Heart left ventricle (tissue), 16 donors: ENCODE measurements at regions of chr21 and their contacts with region 1.

Region 1: DNA sequence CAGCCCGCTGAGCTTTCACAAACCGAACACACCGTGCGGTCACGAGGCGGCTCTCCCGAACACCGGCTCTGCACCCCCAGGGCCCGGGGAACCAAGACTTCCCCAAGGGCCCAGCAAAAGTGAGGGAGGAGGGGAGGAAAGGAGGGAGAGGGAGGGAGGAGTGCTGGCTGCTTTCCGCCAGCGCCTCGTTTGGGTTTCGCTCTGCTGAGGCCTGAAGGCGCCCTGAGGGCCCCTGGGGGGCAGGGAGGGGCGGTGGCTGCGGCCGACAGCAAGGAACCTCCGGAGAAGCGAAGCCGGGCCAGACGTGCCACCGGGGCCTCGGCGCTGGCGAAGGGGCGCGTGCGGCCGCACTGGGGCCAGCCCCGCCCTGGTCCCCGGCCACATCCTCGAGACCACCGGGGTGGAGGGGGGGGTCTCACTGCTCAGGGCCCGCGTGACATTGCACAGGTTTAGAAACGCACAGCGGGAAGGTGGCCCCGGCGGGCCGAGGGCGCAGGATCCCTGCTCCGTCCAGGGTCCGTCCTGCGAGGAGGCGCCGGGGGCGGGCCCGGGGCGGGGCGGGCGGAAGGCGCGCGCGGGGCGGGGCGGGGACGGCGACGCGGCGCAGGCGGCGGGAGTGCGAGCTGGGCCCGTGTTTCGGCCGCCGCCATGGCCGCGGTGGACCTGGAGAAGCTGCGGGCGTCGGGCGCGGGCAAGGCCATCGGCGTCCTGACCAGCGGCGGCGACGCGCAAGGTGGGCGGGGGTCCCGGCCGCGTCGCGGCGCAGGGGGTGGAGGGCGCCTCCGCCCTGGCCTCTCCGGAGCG is at the start of gene PFKL:
- DNase-seq: peak; percentile 72 to 85 (median 76)
- ATAC-seq: peak in 3 of 4 donors; percentile 36 to 72 (median 71)
- H3K4me3 ChIP-seq: peak within 1 kb of the TSS; percentile 61 to 96 (median 83)
- H3K27ac ChIP-seq: peak within 1 kb of the TSS; percentile 80 to 97 (median 92)
- H3K4me1 ChIP-seq: peaks cover 9 to 67% (median 58%) of the 10 kb centered on the region in 12 donors
- H3K27me3 ChIP-seq: no peaks in the 10 kb centered on the region
- CTCF ChIP-seq: no peak
- POLR2A ChIP-seq: peak in 1 of 2 donors; percentile 34
- total RNA-seq, gene PFKL: 36.9 to 85.1 (median 46.1) TPM

Region 2: DNA sequence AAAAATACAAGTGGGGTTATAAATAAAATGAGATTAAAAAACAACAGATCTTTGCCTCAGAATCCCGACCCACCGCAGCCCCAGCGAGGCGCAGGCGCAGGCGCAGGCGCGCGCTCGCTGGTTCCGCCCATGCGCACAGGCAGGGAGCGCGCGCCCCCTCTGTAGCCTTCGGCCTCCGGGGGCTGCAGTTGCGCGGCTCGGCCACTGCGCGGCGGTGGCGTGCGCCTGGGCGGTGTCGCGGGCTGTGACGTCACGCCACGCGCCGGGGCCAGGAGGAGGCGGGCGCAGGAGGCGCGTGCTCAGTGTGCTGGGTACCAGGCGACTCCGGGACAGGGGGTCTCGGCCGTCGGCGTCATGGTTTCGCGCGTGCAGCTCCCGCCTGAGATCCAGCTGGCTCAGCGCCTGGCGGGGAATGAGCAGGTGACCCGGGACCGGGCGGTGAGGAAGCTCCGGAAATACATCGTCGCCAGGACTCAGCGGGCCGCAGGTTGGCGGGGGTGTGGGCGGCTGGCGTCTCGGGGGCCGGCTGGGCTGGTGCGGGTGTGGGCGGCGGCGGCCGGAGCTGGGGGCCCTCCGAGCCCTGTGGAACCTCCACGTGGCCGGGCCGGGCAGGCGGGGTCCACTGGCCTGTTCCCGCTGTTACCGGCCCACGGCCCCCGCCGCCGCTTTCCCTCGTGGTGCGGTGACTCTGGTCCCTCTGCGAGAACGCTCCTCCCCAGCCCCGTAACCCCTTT is 510.2 kb before region 1 on chr21 and contains the start of gene RRP1:
- intact Hi-C with region 1: loop called in 1 of 10 experiments (anchors 10 kb)
- DNase-seq: peak; percentile 89 to 97 (median 93)
- ATAC-seq: peak; percentile 83 to 96 (median 96)
- H3K4me3 ChIP-seq: peak within 1 kb of the TSS; percentile 75 to 97 (median 86)
- H3K27ac ChIP-seq: peak within 1 kb of the TSS in 11 of 12 donors; percentile 65 to 95 (median 89)
- H3K4me1 ChIP-seq: peaks cover 0 to 20% (median 13%) of the 10 kb centered on the region in 12 donors
- H3K27me3 ChIP-seq: no peaks in the 10 kb centered on the region
- CTCF ChIP-seq: peak; percentile 95 to 100 (median 100)
- POLR2A ChIP-seq: peak in 1 of 2 donors; percentile 90
- total RNA-seq, gene RRP1: 6.0 to 15.6 (median 9.8) TPM

Region 3: DNA sequence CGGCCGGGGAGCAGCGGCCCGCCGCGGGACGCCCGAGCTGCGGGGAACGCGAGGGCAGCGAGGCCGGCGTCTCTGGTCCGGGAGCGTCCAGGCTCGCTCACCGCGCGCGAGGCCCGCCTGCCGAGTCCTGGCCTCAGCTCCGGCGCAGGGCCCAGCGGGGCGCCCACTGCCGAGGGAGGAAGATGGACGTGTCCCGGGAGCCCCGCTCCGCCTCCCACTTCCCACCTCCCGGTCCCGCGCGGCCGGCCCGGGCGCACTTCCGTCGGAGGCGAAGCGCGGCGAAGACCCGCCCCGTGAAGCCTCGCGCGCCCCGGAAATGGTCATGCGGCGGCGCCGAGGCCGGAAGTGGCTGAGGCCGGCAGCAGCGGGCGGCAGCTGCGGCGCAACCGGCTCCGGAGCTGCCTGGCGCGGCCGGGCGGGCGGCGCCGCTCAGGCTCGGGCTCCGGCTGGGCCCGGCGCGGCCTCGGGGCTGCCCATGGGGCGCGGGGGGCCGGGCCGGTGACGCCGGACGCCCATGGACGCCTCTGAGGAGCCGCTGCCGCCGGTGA is 287.6 kb before region 1 on chr21 and contains the start of gene TRAPPC10:
- intact Hi-C with region 1: loop called in 1 of 10 experiments (anchors 5 kb)
- DNase-seq: peak; percentile 88 to 93 (median 90)
- ATAC-seq: peak; percentile 73 to 95 (median 93)
- H3K4me3 ChIP-seq: peak within 1 kb of the TSS; percentile 72 to 99 (median 94)
- H3K27ac ChIP-seq: peak within 1 kb of the TSS; percentile 76 to 99 (median 97)
- H3K4me1 ChIP-seq: peaks cover 7 to 48% (median 25%) of the 10 kb centered on the region in 12 donors
- H3K27me3 ChIP-seq: no peaks in the 10 kb centered on the region
- CTCF ChIP-seq: no peak
- POLR2A ChIP-seq: peak; percentile 76 to 91
- total RNA-seq, gene TRAPPC10: 14.6 to 32.0 (median 22.5) TPM

Region 4: GRCh38 chr21:44338971-44339910 is 39.6 kb after region 1 on chr21 and contains the start of gene CFAP410:
- intact Hi-C with region 1: loop called in 1 of 10 experiments (anchors 2 kb)
- DNase-seq: peak; percentile 93 to 97 (median 95)
- ATAC-seq: peak; percentile 90 to 95 (median 94)
- H3K4me3 ChIP-seq: peak within 1 kb of the TSS; percentile 43 to 94 (median 86)
- H3K27ac ChIP-seq: peak within 1 kb of the TSS; percentile 90 to 100 (median 98)
- H3K4me1 ChIP-seq: peaks cover 3 to 19% (median 14%) of the 10 kb centered on the region in 12 donors
- H3K27me3 ChIP-seq: no peaks in the 10 kb centered on the region
- CTCF ChIP-seq: no peak
- POLR2A ChIP-seq: peak; percentile 12 to 96
- total RNA-seq, gene CFAP410: 10.4 to 31.6 (median 15.3) TPM

Region 5: GRCh38 chr21:44792702-44793591 is 493.3 kb after region 1 on chr21:
- intact Hi-C with region 1: loop called in 1 of 10 experiments (anchors 10 kb)
- DNase-seq: peak; percentile 36 to 77 (median 48)
- ATAC-seq: peak; percentile 81 to 93 (median 87)
- H3K4me3 ChIP-seq: no peak overlapping the region
- H3K27ac ChIP-seq: no peak overlapping the region
- H3K4me1 ChIP-seq: peaks cover 0 to 19% (median 10%) of the 10 kb centered on the region in 12 donors
- H3K27me3 ChIP-seq: no peaks in the 10 kb centered on the region
- CTCF ChIP-seq: peak; percentile 67 to 88 (median 76)
- POLR2A ChIP-seq: no peak